Panc1 (cell line): ENCODE measurements at regions of chr9 and their contacts with region 1.

Region 1: GRCh38 chr9:84677092-84677491 is 7.6 kb downstream of the NTRK2 start:
- DNase-seq: no peak
- ATAC-seq: no peak
- H3K4me3 ChIP-seq: no peak overlapping the region
- H3K27ac ChIP-seq: no peak overlapping the region
- H3K4me1 ChIP-seq: no peaks in the 10 kb centered on the region
- H3K27me3 ChIP-seq: no peaks in the 10 kb centered on the region
- CTCF ChIP-seq: no peak

Region 2: DNA sequence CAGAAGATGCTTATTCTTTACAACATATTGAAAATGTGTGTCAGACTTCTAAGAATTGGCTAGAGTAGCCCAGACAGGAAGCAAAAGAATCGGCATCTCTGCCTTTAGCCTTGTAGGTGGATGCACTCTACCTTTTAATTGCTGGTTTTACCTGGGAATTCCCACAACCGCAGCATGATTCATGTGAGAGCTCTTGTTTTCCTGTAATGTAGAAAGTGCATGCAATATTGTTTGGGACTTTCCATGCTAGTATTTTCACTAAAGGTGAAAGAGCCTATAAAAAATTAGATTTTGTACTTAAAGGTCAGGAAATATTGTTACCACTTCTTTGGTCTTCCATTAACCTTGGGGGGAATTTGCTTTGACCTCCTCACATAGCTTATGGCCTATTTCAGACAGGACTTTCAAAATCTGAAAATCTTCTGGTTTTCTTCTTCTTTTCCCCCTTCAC is 82.2 kb after region 1 on chr9:
- CTCF ChIA-PET with region 1: no interaction called
- POLR2A ChIA-PET with region 1: no interaction called
- in situ Hi-C with region 1: no loop called
- intact Hi-C with region 1: no loop called
- DNase-seq: no peak
- ATAC-seq: no peak
- H3K4me3 ChIP-seq: no peak overlapping the region
- H3K27ac ChIP-seq: no peak overlapping the region
- H3K4me1 ChIP-seq: no peaks in the 10 kb centered on the region
- H3K27me3 ChIP-seq: no peaks in the 10 kb centered on the region
- CTCF ChIP-seq: no peak

Region 3: DNA sequence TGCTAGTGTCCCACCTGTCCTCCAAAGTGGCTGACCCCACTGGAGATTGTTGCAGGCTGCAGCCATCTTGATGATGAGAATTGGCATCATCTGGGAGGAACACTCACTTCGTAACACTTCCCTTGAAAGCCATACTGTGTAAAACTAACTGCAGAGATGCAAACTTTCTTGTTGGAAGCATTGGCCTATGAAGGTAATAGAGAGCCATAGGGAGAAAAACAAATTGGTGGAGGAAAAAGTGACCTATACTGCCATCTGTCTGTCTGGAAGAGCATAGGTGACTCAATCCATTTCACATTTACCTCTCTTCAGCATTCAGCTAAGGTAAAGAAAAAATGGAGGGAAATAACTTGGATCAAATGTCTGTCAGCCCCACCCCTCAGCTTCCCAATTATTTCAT is 465.9 kb after region 1 on chr9:
- CTCF ChIA-PET with region 1: no interaction called
- POLR2A ChIA-PET with region 1: interaction called, 11 read pairs
- in situ Hi-C with region 1: no loop called
- intact Hi-C with region 1: no loop called
- DNase-seq: peak; percentile 18
- ATAC-seq: no peak
- H3K4me3 ChIP-seq: no peak overlapping the region
- H3K27ac ChIP-seq: no peak overlapping the region
- H3K4me1 ChIP-seq: no peaks in the 10 kb centered on the region
- H3K27me3 ChIP-seq: no peaks in the 10 kb centered on the region
- CTCF ChIP-seq: peak; percentile 17; the same call in 1 of the 2 replicates

Region 4: GRCh38 chr9:85168412-85168811 is 491.3 kb after region 1 on chr9:
- CTCF ChIA-PET with region 1: no interaction called
- POLR2A ChIA-PET with region 1: no interaction called
- in situ Hi-C with region 1: no loop called
- intact Hi-C with region 1: loop called (anchors 5 kb)
- DNase-seq: no peak
- ATAC-seq: no peak
- H3K4me3 ChIP-seq: no peak overlapping the region
- H3K27ac ChIP-seq: no peak overlapping the region
- H3K4me1 ChIP-seq: no peaks in the 10 kb centered on the region
- H3K27me3 ChIP-seq: no peaks in the 10 kb centered on the region
- CTCF ChIP-seq: no peak